ENCODE measurements at regions of chr13 and their contacts with region 1.

Region 1: DNA sequence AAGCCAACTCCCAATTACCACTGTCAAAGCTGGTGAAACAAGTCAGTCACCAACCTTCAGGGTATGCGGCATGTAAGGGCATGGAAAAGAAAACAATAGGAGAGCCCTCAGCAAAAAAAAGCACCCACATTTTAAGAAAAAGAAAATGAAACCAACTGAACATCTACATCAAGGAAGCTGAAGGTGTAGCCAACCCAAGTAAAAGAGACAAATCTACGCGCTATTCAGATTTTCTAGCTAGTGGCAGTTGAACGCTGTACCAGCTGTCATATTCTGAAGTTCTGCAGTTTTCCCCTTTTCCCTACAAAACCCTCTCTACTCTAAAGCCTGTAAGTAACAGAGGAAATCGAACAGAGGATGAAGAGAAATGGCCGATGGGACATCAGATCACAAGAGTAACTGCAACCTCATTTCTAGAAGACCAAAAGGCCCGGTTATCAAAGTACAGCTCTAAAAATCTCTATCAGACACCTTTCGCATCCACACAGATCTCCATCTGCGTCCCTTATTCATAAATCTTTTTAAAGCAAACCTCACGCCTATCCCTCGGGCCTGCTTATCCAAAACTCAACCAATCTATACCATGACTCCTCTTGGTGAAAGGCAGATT is 1.4 kb downstream of the MYCBP2 start:
- H3K4me3 Mint-ChIP-seq: peak overlapping the region; percentile 98
- H3K27ac Mint-ChIP-seq: peak overlapping the region; percentile 96
- H3K4me1 Mint-ChIP-seq: peaks cover 50% of the 10 kb centered on the region
- H3K27me3 Mint-ChIP-seq: no peaks in the 10 kb centered on the region

Region 2: GRCh38 chr13:77479326-77479725 is 153.8 kb after region 1 on chr13:
- intact Hi-C with region 1: loop called (anchors 2 kb)
- H3K4me3 Mint-ChIP-seq: no peak overlapping the region
- H3K27ac Mint-ChIP-seq: no peak overlapping the region
- H3K4me1 Mint-ChIP-seq: no peaks in the 10 kb centered on the region
- H3K27me3 Mint-ChIP-seq: no peaks in the 10 kb centered on the region

Region 3: GRCh38 chr13:78022164-78022877 is 696.8 kb after region 1 on chr13:
- intact Hi-C with region 1: loop called (anchors 5 kb)
- H3K4me3 Mint-ChIP-seq: no peak overlapping the region
- H3K27ac Mint-ChIP-seq: no peak overlapping the region
- H3K4me1 Mint-ChIP-seq: peaks cover 18% of the 10 kb centered on the region
- H3K27me3 Mint-ChIP-seq: no peaks in the 10 kb centered on the region